ENCODE measurements at regions of chr17 and their contacts with region 1.

Region 1: GRCh38 chr17:42322382-42323267 is 34.3 kb downstream of the STAT5A start:
- DNase-seq: peak; percentile 72
- H3K4me3 ChIP-seq: no peak overlapping the region
- H3K27ac ChIP-seq: no peak overlapping the region
- H3K4me1 ChIP-seq: peaks cover 32% of the 10 kb centered on the region
- H3K27me3 ChIP-seq: no peaks in the 10 kb centered on the region
- CTCF ChIP-seq: peak; percentile 100

Region 2: DNA sequence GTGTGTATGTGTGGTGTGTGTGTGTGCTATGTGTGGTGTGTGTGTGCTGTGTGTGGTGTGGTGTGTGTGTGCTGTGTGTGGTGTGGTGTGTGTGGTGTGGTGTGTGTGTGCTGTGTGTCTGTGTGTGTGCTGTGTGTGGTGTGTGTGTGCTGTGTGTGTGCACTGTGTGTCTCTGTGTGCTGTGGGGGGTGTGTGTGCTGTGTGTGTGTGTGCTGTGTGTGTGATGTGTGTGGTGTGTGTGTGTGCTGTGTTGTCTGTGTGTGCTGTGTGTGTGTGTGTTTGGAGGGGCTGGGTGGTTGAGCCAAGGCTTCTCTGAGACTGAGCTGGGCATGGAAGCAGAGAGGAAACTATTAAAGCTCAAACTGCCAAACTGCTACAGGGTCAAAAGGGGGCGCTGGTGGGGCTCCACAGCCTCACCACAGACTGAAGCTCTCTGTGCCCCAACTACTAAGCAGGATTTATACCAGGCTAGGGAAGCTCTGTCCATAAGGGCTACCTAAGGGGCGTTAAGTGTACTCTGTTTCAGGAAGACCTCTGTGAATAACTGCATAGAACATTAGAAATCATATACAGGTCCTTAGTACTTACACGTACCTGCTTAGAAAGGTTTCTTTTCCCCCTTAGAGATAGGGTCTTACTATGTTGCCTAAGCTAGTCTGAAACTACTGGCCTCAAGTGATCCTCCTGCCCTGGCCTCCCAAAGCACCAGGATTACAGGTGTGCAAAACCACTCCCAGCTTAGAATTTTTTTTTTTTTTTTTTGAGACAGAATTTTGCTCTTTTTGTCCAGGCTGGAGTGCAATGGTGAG is 100.5 kb before region 1 on chr17:
- dilution Hi-C with region 1: no loop called
- DNase-seq: no peak
- H3K4me3 ChIP-seq: no peak overlapping the region
- H3K27ac ChIP-seq: no peak overlapping the region
- H3K4me1 ChIP-seq: no peaks in the 10 kb centered on the region
- H3K27me3 ChIP-seq: no peaks in the 10 kb centered on the region
- CTCF ChIP-seq: peak; percentile 71 to 81 (median 73)

Region 3: DNA sequence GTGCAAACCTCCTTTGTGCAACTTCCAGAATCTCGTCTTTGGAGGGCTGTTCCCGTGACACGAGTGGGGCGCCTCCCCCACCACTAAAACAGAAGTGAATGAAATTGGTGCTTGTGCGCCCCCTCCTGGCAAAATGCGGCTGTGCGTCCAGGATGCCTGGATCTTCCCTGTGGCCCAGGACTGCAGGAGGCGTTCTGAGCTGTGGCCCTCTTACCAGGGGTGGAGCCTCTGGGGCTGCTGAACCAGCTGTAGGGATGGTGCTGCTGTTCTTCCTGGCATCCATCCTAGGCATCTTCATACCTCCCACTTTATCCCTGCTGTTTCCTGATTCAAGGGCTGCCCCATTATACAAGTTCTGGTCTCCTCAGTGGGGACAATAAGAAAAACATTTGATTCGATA is 194.9 kb after region 1 on chr17:
- dilution Hi-C with region 1: loop called (anchors 25 kb)
- DNase-seq: no peak
- H3K4me3 ChIP-seq: no peak overlapping the region
- H3K27ac ChIP-seq: peak overlapping the region; percentile 91
- H3K4me1 ChIP-seq: peaks cover 41% of the 10 kb centered on the region
- H3K27me3 ChIP-seq: no peaks in the 10 kb centered on the region
- CTCF ChIP-seq: peak; percentile 96 to 99 (median 99)